ENCODE measurements at regions of chr12 and their contacts with region 1.

Region 1: GRCh38 chr12:114704096-114704495 is 20.1 kb upstream of the TBX3 start:
- DNase-seq: peak; percentile 60 to 70
- H3K4me3 ChIP-seq: no peak overlapping the region
- H3K4me3 Mint-ChIP-seq: peak overlapping the region; percentile 70
- H3K27ac Mint-ChIP-seq: peak overlapping the region; percentile 95
- H3K4me1 ChIP-seq: peaks cover 38% of the 10 kb centered on the region
- H3K4me1 Mint-ChIP-seq: peaks cover 38% of the 10 kb centered on the region
- H3K27me3 ChIP-seq: no peaks in the 10 kb centered on the region
- H3K27me3 Mint-ChIP-seq: no peaks in the 10 kb centered on the region
- CTCF ChIP-seq: no peak

Region 2: DNA sequence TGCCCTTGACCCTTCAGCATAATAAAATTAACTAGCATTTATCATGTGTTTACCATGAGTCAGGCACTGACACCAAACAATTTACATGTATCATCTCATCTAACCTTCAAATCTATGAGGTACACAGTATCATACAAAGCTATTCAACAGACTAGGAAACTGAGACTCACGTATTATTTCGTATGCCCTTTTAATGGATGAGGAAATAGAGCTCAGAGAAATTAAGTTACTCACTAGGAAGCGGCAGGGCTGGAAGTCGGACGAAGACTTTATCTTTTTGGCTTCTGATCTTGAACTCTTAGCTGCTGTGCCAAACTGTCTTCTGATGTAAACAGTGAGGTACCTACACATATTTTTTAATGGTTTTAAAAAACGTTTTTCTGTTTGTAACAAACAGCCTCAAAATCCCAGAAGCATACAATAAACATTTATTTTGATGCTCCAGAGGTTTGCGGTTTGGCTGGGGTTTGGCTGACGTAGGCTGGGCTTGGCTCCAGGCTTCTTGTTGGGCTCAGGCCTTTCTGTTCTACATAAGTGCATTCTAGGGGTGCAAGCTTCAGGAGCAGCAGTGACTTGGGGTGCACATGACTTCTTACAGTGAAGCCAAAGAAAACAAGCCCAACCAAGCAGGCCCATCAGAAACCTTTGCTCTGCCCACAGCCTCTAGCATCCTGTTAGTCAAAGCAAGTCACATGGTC is 482.8 kb before region 1 on chr12:
- CTCF ChIA-PET with region 1: no interaction called
- POLR2A ChIA-PET with region 1: no interaction called
- intact Hi-C with region 1: no loop called
- DNase-seq: no peak
- H3K4me3 ChIP-seq: no peak overlapping the region
- H3K4me3 Mint-ChIP-seq: no peak overlapping the region
- H3K27ac Mint-ChIP-seq: no peak overlapping the region
- H3K4me1 ChIP-seq: no peaks in the 10 kb centered on the region
- H3K4me1 Mint-ChIP-seq: no peaks in the 10 kb centered on the region
- H3K27me3 ChIP-seq: no peaks in the 10 kb centered on the region
- H3K27me3 Mint-ChIP-seq: peaks cover 25% of the 10 kb centered on the region
- CTCF ChIP-seq: no peak

Region 3: GRCh38 chr12:114457620-114458019 is 246.5 kb before region 1 on chr12:
- CTCF ChIA-PET with region 1: no interaction called
- POLR2A ChIA-PET with region 1: no interaction called
- intact Hi-C with region 1: no loop called
- DNase-seq: peak; percentile 8 to 48
- H3K4me3 ChIP-seq: no peak overlapping the region
- H3K4me3 Mint-ChIP-seq: no peak overlapping the region
- H3K27ac Mint-ChIP-seq: no peak overlapping the region
- H3K4me1 ChIP-seq: 0 out of 2 replicates have a peak, but pooled peaks cover 5% of the 10 kb centered on the region
- H3K4me1 Mint-ChIP-seq: no peaks in the 10 kb centered on the region
- H3K27me3 ChIP-seq: no peaks in the 10 kb centered on the region
- H3K27me3 Mint-ChIP-seq: peaks cover 2% of the 10 kb centered on the region
- CTCF ChIP-seq: no peak

Region 4: GRCh38 chr12:114547636-114548035 is 156.5 kb before region 1 on chr12:
- CTCF ChIA-PET with region 1: no interaction called
- POLR2A ChIA-PET with region 1: no interaction called
- intact Hi-C with region 1: no loop called
- DNase-seq: no peak
- H3K4me3 ChIP-seq: no peak overlapping the region
- H3K4me3 Mint-ChIP-seq: no peak overlapping the region
- H3K27ac Mint-ChIP-seq: no peak overlapping the region
- H3K4me1 ChIP-seq: no peaks in the 10 kb centered on the region
- H3K4me1 Mint-ChIP-seq: no peaks in the 10 kb centered on the region
- H3K27me3 ChIP-seq: no peaks in the 10 kb centered on the region
- H3K27me3 Mint-ChIP-seq: no peaks in the 10 kb centered on the region
- CTCF ChIP-seq: no peak

Region 5: GRCh38 chr12:114721266-114721665 is 17.2 kb after region 1 on chr12:
- CTCF ChIA-PET with region 1: no interaction called
- POLR2A ChIA-PET with region 1: interaction called, 18 read pairs
- intact Hi-C with region 1: no loop called
- DNase-seq: no peak
- H3K4me3 ChIP-seq: no peak overlapping the region
- H3K4me3 Mint-ChIP-seq: no peak overlapping the region
- H3K27ac Mint-ChIP-seq: no peak overlapping the region
- H3K4me1 ChIP-seq: peaks cover 14% of the 10 kb centered on the region
- H3K4me1 Mint-ChIP-seq: peaks cover 7% of the 10 kb centered on the region
- H3K27me3 ChIP-seq: no peaks in the 10 kb centered on the region
- H3K27me3 Mint-ChIP-seq: no peaks in the 10 kb centered on the region
- CTCF ChIP-seq: no peak

Region 6: GRCh38 chr12:114744691-114745090 is 40.6 kb after region 1 on chr12:
- CTCF ChIA-PET with region 1: interaction called, 11 read pairs
- POLR2A ChIA-PET with region 1: interaction called, 3 read pairs
- intact Hi-C with region 1: no loop called
- DNase-seq: no peak
- H3K4me3 ChIP-seq: no peak overlapping the region
- H3K4me3 Mint-ChIP-seq: no peak overlapping the region
- H3K27ac Mint-ChIP-seq: no peak overlapping the region
- H3K4me1 ChIP-seq: no peaks in the 10 kb centered on the region
- H3K4me1 Mint-ChIP-seq: peaks cover 7% of the 10 kb centered on the region
- H3K27me3 ChIP-seq: no peaks in the 10 kb centered on the region
- H3K27me3 Mint-ChIP-seq: no peaks in the 10 kb centered on the region
- CTCF ChIP-seq: no peak

Region 7: GRCh38 chr12:114767906-114768722 is 64.0 kb after region 1 on chr12:
- CTCF ChIA-PET with region 1: interaction called, 6 read pairs
- POLR2A ChIA-PET with region 1: interaction called, 12 read pairs
- intact Hi-C with region 1: loop called (anchors 5 kb)
- DNase-seq: peak; percentile 51 to 67
- H3K4me3 ChIP-seq: no peak overlapping the region
- H3K4me3 Mint-ChIP-seq: peak overlapping the region; percentile 2
- H3K27ac Mint-ChIP-seq: peak overlapping the region; percentile 99
- H3K4me1 ChIP-seq: peaks cover 34% of the 10 kb centered on the region
- H3K4me1 Mint-ChIP-seq: peaks cover 17% of the 10 kb centered on the region
- H3K27me3 ChIP-seq: no peaks in the 10 kb centered on the region
- H3K27me3 Mint-ChIP-seq: no peaks in the 10 kb centered on the region
- CTCF ChIP-seq: no peak

Region 8: GRCh38 chr12:114799574-114800487 is 95.7 kb after region 1 on chr12:
- CTCF ChIA-PET with region 1: interaction called, 4 read pairs
- POLR2A ChIA-PET with region 1: interaction called, 17 read pairs
- intact Hi-C with region 1: loop called (anchors 5 kb)
- DNase-seq: peak; percentile 92 to 96
- H3K4me3 ChIP-seq: no peak overlapping the region
- H3K4me3 Mint-ChIP-seq: no peak overlapping the region
- H3K27ac Mint-ChIP-seq: peak overlapping the region; percentile 81
- H3K4me1 ChIP-seq: peaks cover 32% of the 10 kb centered on the region
- H3K4me1 Mint-ChIP-seq: peaks cover 17% of the 10 kb centered on the region
- H3K27me3 ChIP-seq: no peaks in the 10 kb centered on the region
- H3K27me3 Mint-ChIP-seq: no peaks in the 10 kb centered on the region
- CTCF ChIP-seq: no peak

Region 9: GRCh38 chr12:115398311-115398781 is 694.2 kb after region 1 on chr12:
- CTCF ChIA-PET with region 1: interaction called, 13 read pairs
- POLR2A ChIA-PET with region 1: no interaction called
- intact Hi-C with region 1: no loop called
- DNase-seq: peak; percentile 67 to 77
- H3K4me3 ChIP-seq: no peak overlapping the region
- H3K4me3 Mint-ChIP-seq: no peak overlapping the region
- H3K27ac Mint-ChIP-seq: peak overlapping the region; percentile 19
- H3K4me1 ChIP-seq: peaks cover 29% of the 10 kb centered on the region
- H3K4me1 Mint-ChIP-seq: peaks cover 47% of the 10 kb centered on the region
- H3K27me3 ChIP-seq: no peaks in the 10 kb centered on the region
- H3K27me3 Mint-ChIP-seq: no peaks in the 10 kb centered on the region
- CTCF ChIP-seq: peak in 1 of 2 experiments; percentile 72

Measured in Caco-2 (cell line).